ENCODE measurements at regions of chr5 and their contacts with region 1.

Region 1: GRCh38 chr5:151825445-151825844 is 53.7 kb downstream of the G3BP1 start:
- H3K4me3 ChIP-seq: no peak overlapping the region
- H3K27ac ChIP-seq: no peak overlapping the region
- H3K4me1 ChIP-seq: no peaks in the 10 kb centered on the region
- CTCF ChIP-seq: peak; percentile 64

Region 2: DNA sequence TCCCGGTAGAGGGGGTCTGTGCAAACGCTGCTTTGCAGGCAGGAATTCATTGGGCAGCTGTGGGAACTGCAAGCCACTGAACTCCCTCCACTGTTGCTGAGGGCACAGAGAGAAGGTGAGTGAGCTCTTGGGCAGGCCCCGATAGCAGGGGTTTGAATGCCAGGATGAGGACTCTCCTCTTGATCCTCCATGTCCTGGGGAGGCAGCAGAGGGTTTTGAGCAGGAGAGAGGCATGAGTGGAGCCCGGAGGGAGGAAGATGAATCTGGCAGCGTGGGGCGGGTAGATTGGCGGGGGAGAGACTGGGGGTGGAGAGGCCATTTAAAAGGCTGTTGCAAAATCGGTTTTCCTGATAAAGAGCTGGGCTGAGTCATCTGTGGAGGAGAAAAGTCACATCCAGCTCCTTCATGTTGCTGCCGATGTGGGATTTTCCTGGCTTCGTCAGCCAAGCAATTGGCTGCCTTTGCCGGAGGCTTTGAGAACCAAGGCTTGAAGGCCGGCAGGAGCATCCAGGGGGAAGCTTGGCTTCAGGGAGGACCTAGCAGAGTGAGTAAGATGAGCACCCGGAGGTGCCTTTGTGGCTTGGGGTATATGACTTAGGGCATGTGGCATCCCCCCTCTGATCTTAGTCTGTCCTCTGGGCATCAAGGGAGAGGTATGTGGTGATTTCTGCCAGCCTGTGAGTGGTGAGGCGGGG is 1185.0 kb before region 1 on chr5 and contains the start of gene SYNPO:
- CTCF ChIA-PET with region 1: no interaction called
- POLR2A ChIA-PET with region 1: no interaction called
- H3K4me3 ChIP-seq: no peak within 1 kb of the TSS
- H3K27ac ChIP-seq: no peak within 1 kb of the TSS
- H3K4me1 ChIP-seq: peaks cover 34% of the 10 kb centered on the region
- CTCF ChIP-seq: no peak

Region 3: GRCh38 chr5:151815051-151815450 is 10.4 kb before region 1 on chr5:
- CTCF ChIA-PET with region 1: interaction called, 10 read pairs
- POLR2A ChIA-PET with region 1: no interaction called
- H3K4me3 ChIP-seq: no peak overlapping the region
- H3K27ac ChIP-seq: no peak overlapping the region
- H3K4me1 ChIP-seq: no peaks in the 10 kb centered on the region
- CTCF ChIP-seq: no peak

Region 4: GRCh38 chr5:151851719-151852118 is 26.3 kb after region 1 on chr5:
- CTCF ChIA-PET with region 1: no interaction called
- POLR2A ChIA-PET with region 1: no interaction called
- H3K4me3 ChIP-seq: no peak overlapping the region
- H3K27ac ChIP-seq: no peak overlapping the region
- H3K4me1 ChIP-seq: no peaks in the 10 kb centered on the region
- CTCF ChIP-seq: no peak

Region 5: DNA sequence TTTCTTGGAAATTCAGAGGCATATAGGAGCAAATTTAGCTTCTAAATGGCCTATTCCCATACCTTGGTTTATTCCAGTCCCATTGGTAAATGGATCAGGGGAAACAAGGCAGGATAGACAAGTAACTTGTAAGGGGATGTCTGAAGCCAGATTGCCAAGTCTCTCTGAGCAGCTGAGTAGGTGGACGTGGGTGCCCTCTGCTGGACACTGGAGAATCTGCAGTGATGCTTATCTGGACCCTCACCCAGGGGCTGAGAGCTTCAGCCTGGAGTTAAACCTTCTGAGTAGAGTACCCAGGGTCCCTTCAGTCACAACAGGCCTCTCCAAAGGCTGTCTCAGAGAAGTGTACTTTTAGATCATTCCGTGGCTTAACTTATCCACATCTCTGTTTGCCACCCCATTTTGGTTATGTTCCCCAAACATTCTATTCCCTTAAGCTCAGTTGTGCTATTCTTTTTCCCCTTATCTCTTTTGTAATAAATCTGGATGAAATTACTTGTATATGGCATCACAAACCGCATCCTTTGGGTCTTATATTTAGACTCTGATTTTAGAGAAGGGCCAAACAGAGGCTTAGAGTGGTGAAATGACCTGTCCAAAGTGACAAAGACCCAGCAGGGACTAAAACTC is 317.5 kb after region 1 on chr5:
- CTCF ChIA-PET with region 1: interaction called, 142 read pairs
- POLR2A ChIA-PET with region 1: interaction called, 7 read pairs
- H3K4me3 ChIP-seq: no peak overlapping the region
- H3K27ac ChIP-seq: no peak overlapping the region
- H3K4me1 ChIP-seq: peaks cover 3% of the 10 kb centered on the region
- CTCF ChIP-seq: peak; percentile 63; the same call in 1 of the 2 replicates

Region 6: DNA sequence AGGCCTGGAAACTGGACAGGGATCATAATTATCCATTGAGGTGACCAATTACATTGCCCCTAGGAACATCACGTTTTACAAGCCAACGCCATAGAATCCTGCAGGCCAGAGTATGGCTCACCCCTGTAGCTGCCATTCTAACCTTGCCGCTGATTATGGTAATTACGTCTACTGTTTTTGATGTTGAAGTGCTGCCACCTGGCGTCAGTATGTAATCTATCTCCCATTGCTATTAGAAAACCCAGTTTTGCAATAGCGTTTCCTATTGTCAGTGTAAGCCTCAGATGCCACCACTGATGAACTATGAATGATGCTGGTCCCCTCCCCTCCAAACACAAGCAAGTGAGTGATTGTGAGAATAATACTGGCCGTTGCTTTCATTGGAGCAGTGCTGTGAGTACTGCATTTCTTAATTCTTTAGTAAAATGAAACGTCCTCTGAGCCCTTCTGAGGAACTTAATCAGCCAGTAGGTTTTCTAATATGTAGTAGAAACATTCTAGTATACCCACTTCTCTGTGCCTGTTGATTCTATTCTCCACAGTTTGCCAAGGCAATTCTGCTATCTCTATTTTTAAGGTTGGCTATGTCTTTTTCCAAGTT is 680.1 kb after region 1 on chr5:
- CTCF ChIA-PET with region 1: interaction called, 10 read pairs
- POLR2A ChIA-PET with region 1: no interaction called
- H3K4me3 ChIP-seq: no peak overlapping the region
- H3K27ac ChIP-seq: no peak overlapping the region
- H3K4me1 ChIP-seq: no peaks in the 10 kb centered on the region
- CTCF ChIP-seq: 0 out of 2 replicates have a peak, but pooled peaks have one; percentile 14

Measured in HEK293 (cell line).